Transverse colon (tissue), 4 donors: ENCODE measurements at regions of chr1 and their contacts with region 1.

Region 1: DNA sequence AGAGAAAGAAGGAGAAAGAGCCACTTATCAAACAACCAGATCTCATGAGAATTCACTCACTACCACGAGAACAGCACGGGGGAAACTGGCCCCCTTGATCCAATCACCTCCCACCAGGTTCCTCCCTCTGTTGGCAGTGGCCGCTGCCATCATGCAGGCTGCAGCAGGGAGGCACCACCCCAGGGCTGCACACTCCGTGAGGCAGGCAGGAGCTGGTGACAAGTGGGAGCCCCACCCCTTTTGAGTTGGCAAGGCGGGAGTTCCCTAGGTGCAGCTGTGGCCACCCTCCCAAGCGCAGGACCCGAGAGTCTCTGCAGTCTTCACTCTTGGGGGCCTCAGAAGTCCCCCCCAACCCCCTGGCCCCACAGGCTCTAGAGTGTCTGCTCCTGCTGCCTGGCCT is 83.9 kb upstream of the GJB5 start:
- DNase-seq: no peak
- H3K4me3 ChIP-seq: no peak overlapping the region
- H3K27ac ChIP-seq: no peak overlapping the region
- H3K4me1 ChIP-seq: no peaks in the 10 kb centered on the region
- H3K27me3 ChIP-seq: no peaks in the 10 kb centered on the region
- CTCF ChIP-seq: no peak
- EP300 ChIP-seq: no peak
- POLR2A ChIP-seq: no peak

Region 2: GRCh38 chr1:34101151-34101550 is 569.8 kb before region 1 on chr1:
- in situ Hi-C with region 1: no loop called
- intact Hi-C with region 1: loop called (anchors 5 kb)
- DNase-seq: no peak
- H3K4me3 ChIP-seq: no peak overlapping the region
- H3K27ac ChIP-seq: no peak overlapping the region
- H3K4me1 ChIP-seq: no peaks in the 10 kb centered on the region
- H3K27me3 ChIP-seq: no peaks in the 10 kb centered on the region
- CTCF ChIP-seq: no peak
- EP300 ChIP-seq: no peak
- POLR2A ChIP-seq: no peak

Region 3: DNA sequence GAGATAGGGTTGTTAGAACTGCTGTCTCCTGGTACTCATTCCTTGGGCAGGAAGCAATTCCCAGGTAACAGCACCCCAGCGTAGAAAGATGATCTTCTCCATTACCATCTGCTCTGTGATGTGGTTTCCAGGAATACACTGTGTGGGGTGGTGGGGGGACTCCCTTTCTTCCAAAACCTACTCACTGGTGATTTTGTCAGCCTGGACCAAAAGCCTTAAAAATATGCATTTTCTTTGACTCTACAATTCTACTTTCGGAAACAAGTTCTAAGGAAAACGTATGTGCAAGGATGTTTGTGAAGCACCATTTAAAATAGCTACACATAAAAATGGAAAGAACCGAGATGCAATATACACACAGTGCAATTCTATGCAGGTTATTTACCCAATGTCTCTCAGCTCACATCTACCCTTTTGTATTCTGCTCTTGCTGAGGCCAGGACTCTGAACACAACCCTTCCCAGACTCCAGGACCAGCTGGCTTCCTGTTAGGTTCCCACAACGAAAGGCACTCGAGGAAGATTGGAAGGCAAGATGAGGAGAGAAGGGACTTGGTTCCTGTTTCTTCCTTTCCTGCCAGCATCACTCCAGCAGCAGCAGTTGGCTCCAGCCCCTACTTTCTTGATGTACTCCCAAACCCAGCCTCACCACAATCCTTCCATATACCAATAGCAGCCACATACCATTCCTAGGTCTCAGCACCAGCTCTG is 50.8 kb after region 1 on chr1:
- in situ Hi-C with region 1: no loop called
- intact Hi-C with region 1: no loop called
- DNase-seq: no peak
- H3K4me3 ChIP-seq: no peak overlapping the region
- H3K27ac ChIP-seq: no peak overlapping the region
- H3K4me1 ChIP-seq: no peaks in the 10 kb centered on the region
- H3K27me3 ChIP-seq: peaks cover 8% of the 10 kb centered on the region
- CTCF ChIP-seq: no peak
- EP300 ChIP-seq: no peak
- POLR2A ChIP-seq: no peak